HEK293T (cell line): ENCODE measurements at regions of chr10 and their contacts with region 1.

Region 1: GRCh38 chr10:29254123-29255046 is 34.5 kb upstream of the LYZL1 start:
- DNase-seq: peak; percentile 18

Region 2: GRCh38 chr10:28991326-28992270 is 262.8 kb before region 1 on chr10:
- CTCF ChIA-PET with region 1: no interaction called
- POLR2A ChIA-PET with region 1: no interaction called
- DNase-seq: peak; percentile 53

Region 3: DNA sequence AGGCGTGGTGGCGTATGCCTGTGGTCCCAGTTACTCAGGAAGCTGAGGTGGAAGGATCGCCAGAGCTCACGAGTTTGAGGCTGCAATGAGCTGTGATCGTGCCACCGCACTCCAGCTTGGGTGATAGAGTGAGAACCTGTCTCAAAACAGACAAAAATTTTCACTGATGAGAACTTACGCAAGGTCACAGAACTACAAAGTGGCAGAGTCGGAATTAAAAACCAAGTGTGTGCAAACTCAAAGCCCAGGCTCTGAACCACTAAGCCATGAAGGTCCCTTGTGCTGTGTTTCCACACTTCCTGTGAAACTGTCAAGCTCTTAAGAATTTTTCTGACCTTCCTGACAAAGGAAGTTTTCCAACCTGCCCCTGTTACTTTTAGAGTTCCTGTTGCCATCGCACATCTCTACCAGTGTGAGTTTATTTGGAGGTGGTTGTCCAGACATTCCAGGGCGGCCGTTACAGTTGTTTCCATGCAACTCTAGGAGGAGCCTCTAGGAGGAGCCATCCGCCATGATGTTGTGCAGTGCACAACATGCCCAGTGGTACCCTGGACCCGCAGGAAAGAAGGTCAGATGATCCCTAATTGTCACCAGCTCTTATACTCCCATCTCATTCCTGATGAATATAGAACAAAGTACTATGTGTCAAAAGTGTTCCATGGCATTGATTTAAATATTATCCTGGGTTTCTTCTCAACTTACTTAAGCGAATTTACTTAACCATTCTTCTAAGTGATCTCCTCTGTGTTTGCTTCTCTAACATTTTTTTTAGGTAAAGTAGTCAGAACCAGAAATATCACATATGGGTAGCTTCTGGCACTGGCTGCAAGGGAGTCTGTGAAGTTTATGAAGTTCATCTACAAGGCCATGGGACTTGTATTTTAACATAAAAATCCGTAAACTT is 14.6 kb before region 1 on chr10:
- CTCF ChIA-PET with region 1: interaction called, 25 read pairs
- POLR2A ChIA-PET with region 1: interaction called, 4 read pairs
- DNase-seq: peak; percentile 59

Region 4: DNA sequence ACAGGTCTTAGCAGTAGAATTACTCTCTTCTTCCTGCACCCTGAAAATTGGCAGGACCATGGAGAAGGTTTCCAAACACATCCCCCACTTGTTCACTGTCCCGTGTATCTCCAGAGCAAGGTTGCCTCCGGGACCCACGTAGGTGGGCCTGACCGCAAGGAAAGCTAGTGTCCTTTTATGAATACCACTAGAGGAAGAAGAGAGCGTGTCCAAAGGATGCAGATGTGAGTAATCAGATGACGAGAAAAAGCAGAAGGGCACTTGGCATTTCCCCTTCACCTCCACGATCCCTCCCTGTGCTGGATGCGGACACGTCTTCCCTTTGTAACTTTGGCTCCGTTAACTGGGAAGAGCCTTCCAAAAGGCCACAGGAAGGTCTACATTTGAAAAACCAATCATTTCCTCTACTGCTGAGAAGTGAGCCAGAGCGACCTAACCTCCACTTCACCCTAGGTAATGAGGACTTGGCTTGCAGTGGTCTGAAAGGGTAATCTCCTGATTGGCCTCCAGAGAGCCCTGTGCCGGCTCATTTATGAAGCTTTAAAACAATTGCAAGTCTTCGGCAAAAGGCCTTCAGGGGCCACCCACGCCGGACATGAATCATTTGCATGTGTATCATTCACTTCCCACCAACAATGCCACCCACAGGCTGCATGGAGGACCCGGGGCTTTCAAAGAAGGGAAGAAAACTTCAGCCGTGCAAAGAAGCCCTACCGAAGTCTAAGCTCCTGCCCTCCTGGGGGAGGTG is 89.9 kb after region 1 on chr10:
- CTCF ChIA-PET with region 1: no interaction called
- POLR2A ChIA-PET with region 1: no interaction called
- DNase-seq: no peak

Region 5: DNA sequence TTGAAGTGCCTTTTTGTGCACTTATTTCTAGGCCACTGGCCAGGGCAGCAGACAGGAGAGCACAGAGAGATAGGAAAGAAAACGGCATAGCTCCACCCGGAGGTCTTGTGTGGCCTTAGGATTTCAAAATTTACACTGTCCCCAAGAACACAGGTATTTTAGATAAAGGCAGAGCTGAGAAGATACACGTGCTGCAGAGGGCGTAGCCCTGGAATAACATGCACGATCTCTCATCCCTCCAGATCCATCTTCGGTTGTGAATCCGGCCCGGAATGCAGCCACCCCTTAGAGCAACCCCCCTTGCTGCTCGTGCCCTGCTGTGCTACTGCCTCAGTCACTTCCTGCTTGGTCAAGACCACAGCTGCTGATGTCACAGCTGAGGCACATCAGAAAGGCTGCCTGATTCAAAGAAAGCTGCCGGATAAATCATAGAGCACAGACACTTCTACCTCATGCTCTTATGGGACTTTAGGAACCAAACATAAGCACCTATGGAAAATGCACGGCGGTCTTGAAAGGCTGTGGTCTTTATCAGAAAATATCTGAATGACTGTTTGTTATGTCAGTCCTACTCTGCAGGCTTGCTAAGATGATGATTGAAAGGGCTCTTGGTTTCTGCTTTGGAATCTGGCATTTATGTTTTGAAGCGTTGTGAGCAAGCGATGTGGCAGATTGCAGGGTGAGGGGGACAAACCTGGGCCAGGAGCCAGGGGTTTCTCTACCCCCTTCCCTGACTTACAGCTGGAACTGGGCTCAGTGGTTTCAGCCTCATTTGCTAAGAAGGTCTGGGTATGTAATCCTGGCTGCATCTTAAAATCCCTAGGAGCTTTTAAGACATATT is 228.4 kb after region 1 on chr10:
- CTCF ChIA-PET with region 1: no interaction called
- POLR2A ChIA-PET with region 1: no interaction called
- DNase-seq: no peak